ENCODE measurements at regions of chr2 and their contacts with region 1.

Region 1: GRCh38 chr2:176814306-176815052 is 398.1 kb upstream of the HNRNPA3 start:
- DNase-seq: peak; percentile 14 to 52 (median 44)
- H3K4me3 ChIP-seq: no peak overlapping the region
- H3K27ac ChIP-seq: no peak overlapping the region
- H3K4me1 ChIP-seq: no peaks in the 10 kb centered on the region
- H3K27me3 ChIP-seq: no peaks in the 10 kb centered on the region

Region 2: DNA sequence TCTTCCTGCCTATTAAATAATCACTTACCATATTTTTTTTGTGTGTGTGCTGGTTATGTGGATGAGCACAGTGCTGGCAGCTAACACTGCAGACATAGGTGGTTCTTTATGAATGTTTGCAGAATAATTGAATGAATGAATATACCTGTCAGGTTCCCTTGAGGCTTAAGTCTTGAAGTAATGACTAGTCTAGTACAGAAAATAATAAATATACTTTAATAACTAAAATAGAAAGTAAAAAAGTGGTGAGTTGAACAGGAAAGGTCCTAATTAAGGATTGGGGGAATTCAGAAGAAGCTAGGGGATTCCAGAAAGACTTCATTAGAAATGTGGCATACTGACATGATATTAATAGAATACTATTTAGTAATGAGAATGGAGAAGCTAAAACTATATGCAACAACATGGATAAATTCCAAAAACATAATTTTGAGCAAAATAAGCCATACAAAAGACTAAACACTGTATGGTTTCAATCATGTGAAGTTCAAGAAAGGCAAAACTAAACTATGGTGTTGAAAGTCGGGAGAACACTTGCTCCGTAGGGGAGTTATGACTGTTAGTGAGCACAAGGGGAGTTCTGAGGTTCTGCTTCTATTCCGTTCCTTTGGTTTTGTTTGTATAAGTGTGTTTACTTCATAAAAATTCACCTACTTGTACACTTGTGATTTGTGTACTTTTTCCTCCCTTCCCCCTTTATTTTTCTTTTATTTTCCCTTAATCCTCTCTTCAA is 80.6 kb before region 1 on chr2:
- CTCF ChIA-PET with region 1: no interaction called
- POLR2A ChIA-PET with region 1: no interaction called
- DNase-seq: no peak
- H3K4me3 ChIP-seq: no peak overlapping the region
- H3K27ac ChIP-seq: no peak overlapping the region
- H3K4me1 ChIP-seq: no peaks in the 10 kb centered on the region
- H3K27me3 ChIP-seq: peaks cover 0 to 11% (median 1%) of the 10 kb centered on the region in 5 experiments

Region 3: DNA sequence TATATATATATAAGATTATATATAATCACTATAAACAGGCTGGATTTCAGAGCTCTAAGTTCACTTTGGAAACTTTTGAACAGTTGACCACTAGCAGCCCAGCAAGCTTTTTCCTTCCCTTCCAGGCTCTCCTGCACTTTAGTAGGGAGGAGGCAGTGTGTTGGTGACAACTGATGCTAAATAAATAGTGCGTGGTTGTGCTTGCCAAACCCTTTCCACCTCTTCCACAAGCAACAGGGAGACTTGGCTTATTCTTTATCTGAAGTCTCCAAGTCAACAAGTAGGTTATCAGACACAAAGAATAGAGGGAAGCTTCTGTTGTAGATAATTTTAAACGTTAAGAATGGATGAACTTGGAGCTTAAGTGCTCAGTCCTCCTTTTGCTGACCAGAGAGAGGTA is 10.1 kb before region 1 on chr2:
- CTCF ChIA-PET with region 1: interaction called, 22 read pairs
- POLR2A ChIA-PET with region 1: no interaction called
- DNase-seq: no peak
- H3K4me3 ChIP-seq: no peak overlapping the region
- H3K27ac ChIP-seq: no peak overlapping the region
- H3K4me1 ChIP-seq: no peaks in the 10 kb centered on the region
- H3K27me3 ChIP-seq: no peaks in the 10 kb centered on the region

Region 4: GRCh38 chr2:176924909-176925534 is 110.5 kb after region 1 on chr2:
- CTCF ChIA-PET with region 1: no interaction called
- POLR2A ChIA-PET with region 1: no interaction called
- DNase-seq: no peak
- H3K4me3 ChIP-seq: no peak overlapping the region
- H3K27ac ChIP-seq: no peak overlapping the region
- H3K4me1 ChIP-seq: no peaks in the 10 kb centered on the region
- H3K27me3 ChIP-seq: no peaks in the 10 kb centered on the region

Region 5: DNA sequence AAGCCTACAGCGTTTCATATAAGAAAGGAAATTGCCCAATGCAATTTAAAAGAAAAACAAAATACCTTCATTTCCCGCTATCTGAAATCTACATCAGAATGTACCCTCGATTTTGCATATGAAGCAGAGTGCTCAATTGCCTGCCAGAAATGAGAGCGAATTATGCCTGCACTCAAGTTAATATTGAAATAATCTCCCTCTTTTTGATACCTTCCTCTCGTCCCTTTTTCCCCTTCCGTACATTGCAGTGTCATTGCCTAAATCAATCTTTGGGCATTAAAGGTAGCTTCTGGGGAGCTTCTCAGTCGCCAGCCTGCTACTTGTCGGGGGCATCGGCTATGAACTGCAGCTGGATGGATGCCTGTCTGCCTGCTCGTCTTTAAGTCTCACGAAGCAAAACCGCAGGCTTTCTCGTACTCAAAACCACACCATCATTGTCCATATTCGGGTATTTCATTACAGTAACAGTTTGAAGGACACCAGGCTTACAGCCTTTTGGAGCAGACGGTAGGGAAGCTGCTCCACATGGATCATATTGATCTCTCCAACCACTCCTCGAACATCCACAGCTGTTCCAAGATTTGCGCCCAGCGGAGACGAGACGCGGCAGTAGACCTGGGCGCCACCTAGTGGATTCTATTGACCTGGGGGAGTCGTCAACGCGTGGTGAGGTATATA is 334.1 kb after region 1 on chr2:
- CTCF ChIA-PET with region 1: interaction called, 46 read pairs
- POLR2A ChIA-PET with region 1: no interaction called
- DNase-seq: peak; percentile 73 to 88 (median 80)
- H3K4me3 ChIP-seq: peak overlapping the region in 6 of 7 experiments; percentile 63 to 76 (median 66)
- H3K27ac ChIP-seq: no peak overlapping the region
- H3K4me1 ChIP-seq: peaks cover under 1 to 13% (median 9%) of the 10 kb centered on the region in 4 experiments
- H3K27me3 ChIP-seq: peaks cover 0 to 25% (median 9%) of the 10 kb centered on the region in 5 experiments